ENCODE measurements at regions of chr21 and their contacts with region 1.

Region 1: GRCh38 chr21:41678944-41679343 is 87.9 kb downstream of the RIPK4 start:
- DNase-seq: peak; percentile 94
- ATAC-seq: peak; percentile 84
- H3K4me3 ChIP-seq: peak overlapping the region; percentile 33 to 46
- H3K27ac ChIP-seq: peak overlapping the region; percentile 97
- H3K4me1 ChIP-seq: peaks cover 78% of the 10 kb centered on the region
- H3K27me3 ChIP-seq: no peaks in the 10 kb centered on the region
- CTCF ChIP-seq: no peak

Region 2: DNA sequence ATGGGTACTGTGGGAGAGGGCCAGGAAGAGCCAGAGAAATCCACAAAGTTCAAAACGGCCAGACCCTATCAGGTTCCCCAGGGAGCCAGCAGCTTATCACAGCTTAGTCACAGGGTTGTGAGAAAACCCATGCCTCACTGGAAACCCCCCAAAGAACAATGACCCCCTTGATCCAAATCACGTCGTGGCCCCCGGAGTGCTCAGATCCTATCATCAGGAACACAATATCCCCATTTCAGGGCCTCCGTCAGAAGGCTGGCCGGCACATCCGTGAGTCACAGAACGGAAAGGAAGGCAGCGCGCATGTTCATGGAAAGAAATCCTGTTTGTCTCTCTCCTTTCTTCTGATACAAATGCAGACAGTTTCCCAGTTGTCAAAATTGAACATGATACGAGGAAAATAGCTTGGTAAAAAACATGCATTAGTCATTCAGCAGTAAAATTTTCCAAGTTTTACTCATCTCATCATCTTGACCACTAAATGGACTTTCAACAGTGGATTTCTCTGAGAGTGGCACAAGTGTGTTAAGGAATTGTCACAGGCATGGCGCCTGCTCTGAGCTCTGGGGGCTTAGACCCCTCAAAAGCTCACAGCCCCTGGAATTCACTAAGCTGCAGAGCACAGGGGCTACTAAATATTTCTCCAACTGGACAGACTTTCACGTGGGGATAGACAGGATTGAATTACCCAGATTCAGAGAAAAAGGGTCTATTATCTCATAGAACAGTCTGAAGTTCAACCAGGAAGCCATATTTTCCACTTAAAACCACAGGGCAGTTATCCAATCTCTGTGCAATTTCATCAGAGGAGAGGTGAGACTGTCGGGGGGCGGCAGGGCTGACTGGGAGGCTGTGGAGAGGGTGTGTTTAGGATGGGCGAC is 36.9 kb before region 1 on chr21:
- CTCF ChIA-PET with region 1: interaction called, 8 read pairs
- POLR2A ChIA-PET with region 1: interaction called, 8 read pairs
- in situ Hi-C with region 1: no loop called
- intact Hi-C with region 1: loop called (anchors 5 kb)
- DNase-seq: no peak
- ATAC-seq: peak; percentile 89
- H3K4me3 ChIP-seq: no peak overlapping the region
- H3K27ac ChIP-seq: peak overlapping the region; percentile 100
- H3K4me1 ChIP-seq: peaks cover 32% of the 10 kb centered on the region
- H3K27me3 ChIP-seq: no peaks in the 10 kb centered on the region
- CTCF ChIP-seq: no peak

Region 3: DNA sequence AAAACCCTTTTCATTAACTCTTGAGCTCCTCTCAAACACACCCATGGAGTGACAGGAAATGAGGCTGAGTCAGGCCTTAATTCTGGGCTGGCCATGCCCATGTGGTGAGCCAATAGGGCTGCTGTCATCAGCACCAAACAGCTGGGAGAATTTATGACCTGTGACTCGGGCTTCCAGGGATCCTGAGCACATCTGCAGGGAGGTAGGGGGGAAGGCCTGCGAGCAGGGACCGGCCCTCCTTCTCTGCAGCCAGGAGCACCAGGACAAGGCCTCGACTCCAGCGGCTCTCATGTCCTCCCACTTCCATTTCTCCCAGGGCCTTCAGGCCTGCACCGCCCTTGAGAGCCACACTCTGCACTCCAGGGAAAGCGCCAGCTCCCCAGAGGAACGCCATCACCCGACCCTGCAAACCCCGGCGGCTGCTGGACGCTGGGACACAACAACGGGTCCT is 73.3 kb after region 1 on chr21:
- CTCF ChIA-PET with region 1: no interaction called
- POLR2A ChIA-PET with region 1: interaction called, 5 read pairs
- in situ Hi-C with region 1: no loop called
- intact Hi-C with region 1: loop called (anchors 5 kb)
- DNase-seq: no peak
- ATAC-seq: peak; percentile 57
- H3K4me3 ChIP-seq: peak overlapping the region in 1 of 2 experiments; percentile 2; a peak in 2 of 4 replicates
- H3K27ac ChIP-seq: peak overlapping the region; percentile 94
- H3K4me1 ChIP-seq: peaks cover 90% of the 10 kb centered on the region
- H3K27me3 ChIP-seq: no peaks in the 10 kb centered on the region
- CTCF ChIP-seq: no peak

Measured in Panc1 (cell line).